Naive thymus-derived CD4-positive, alpha-beta T cell (primary cell): ENCODE measurements at regions of chr1 and their contacts with region 1.

Region 1: GRCh38 chr1:2314803-2315673 is 76.3 kb downstream of the MORN1 start:
- DNase-seq: peak; percentile 56 to 77 (median 70)
- ATAC-seq: peak; percentile 81
- H3K4me3 ChIP-seq: peak overlapping the region; percentile 55
- H3K4me3 Mint-ChIP-seq: peak overlapping the region in 9 of 10 donors; percentile 12 to 73 (median 64)
- H3K27ac ChIP-seq: peak overlapping the region; percentile 84
- H3K27ac Mint-ChIP-seq: peak overlapping the region in 8 of 9 donors; percentile 38 to 86 (median 65)
- H3K4me1 ChIP-seq: peaks cover 29 to 42% of the 10 kb centered on the region in 2 donors
- H3K4me1 Mint-ChIP-seq: peaks cover 3 to 19% (median 12%) of the 10 kb centered on the region in 7 donors
- H3K27me3 ChIP-seq: no peaks in the 10 kb centered on the region
- H3K27me3 Mint-ChIP-seq: no peaks in the 10 kb centered on the region

Region 2: DNA sequence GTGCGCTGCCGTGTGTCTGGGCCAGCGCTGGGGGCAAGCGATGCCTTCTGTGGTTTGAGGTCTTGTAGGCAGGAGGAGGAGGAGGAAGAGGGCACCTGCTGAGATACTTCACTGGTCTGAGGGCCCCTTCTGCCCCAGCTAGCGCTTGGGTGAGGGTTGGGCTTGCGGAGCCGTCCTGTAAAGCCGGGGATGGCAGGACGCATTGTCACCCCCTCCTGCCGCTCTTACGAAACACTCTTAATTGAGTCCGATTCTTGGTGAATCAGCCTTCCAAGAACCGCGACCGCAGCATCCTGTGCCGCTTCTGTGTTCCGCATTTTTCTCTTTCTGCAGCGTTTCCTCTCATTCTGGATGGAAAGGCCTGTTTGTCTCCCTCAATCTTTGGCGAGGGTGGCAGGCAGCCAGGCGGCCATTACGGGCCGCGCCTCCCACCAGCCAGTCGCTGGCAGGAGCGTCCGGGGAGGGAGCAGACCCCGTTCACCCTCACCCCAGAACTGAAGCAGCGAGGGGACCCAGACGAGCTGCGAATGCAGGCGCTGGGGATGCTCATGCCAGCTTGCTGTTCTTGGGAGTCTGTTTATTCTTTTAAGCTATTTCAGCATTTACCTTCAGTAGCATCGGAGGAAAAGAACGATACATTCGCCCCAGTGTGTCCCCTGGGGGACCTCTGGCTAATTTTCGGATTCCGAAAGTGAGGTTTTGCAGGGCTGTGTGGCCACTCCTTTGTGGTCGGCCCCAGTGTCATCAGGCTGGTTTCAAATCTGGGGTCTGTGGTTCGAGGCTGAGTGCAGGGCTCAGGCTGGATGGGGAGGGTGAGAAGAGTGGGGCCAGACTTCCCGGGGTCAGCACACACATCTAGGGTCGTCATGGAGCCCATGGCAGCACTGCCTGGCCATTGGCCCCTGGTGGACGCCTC is 24.2 kb before region 1 on chr1:
- CTCF ChIA-PET with region 1: interaction called, 4 read pairs
- POLR2A ChIA-PET with region 1: interaction called, 3 read pairs
- intact Hi-C with region 1: loop called in 1 of 2 experiments (anchors 1 kb)
- DNase-seq: peak; percentile 44 to 83 (median 79)
- ATAC-seq: peak; percentile 82
- H3K4me3 ChIP-seq: peak overlapping the region; percentile 52
- H3K4me3 Mint-ChIP-seq: peak overlapping the region; percentile 81 to 94 (median 88)
- H3K27ac ChIP-seq: peak overlapping the region; percentile 68
- H3K27ac Mint-ChIP-seq: peak overlapping the region; percentile 95 to 97 (median 96)
- H3K4me1 ChIP-seq: peaks cover 49 to 91% of the 10 kb centered on the region in 2 donors
- H3K4me1 Mint-ChIP-seq: peaks cover 51 to 98% (median 79%) of the 10 kb centered on the region in 7 donors
- H3K27me3 ChIP-seq: no peaks in the 10 kb centered on the region
- H3K27me3 Mint-ChIP-seq: no peaks in the 10 kb centered on the region

Region 3: GRCh38 chr1:2360588-2361364 is 45.7 kb after region 1 on chr1:
- CTCF ChIA-PET with region 1: no interaction called
- POLR2A ChIA-PET with region 1: no interaction called
- intact Hi-C with region 1: no loop called
- DNase-seq: no peak
- ATAC-seq: no peak
- H3K4me3 ChIP-seq: no peak overlapping the region
- H3K4me3 Mint-ChIP-seq: no peak overlapping the region
- H3K27ac ChIP-seq: no peak overlapping the region
- H3K27ac Mint-ChIP-seq: no peak overlapping the region
- H3K4me1 ChIP-seq: no peaks in the 10 kb centered on the region
- H3K4me1 Mint-ChIP-seq: no peaks in the 10 kb centered on the region
- H3K27me3 ChIP-seq: no peaks in the 10 kb centered on the region
- H3K27me3 Mint-ChIP-seq: peaks cover 0 to 5% (median 0%) of the 10 kb centered on the region in 5 donors

Region 4: DNA sequence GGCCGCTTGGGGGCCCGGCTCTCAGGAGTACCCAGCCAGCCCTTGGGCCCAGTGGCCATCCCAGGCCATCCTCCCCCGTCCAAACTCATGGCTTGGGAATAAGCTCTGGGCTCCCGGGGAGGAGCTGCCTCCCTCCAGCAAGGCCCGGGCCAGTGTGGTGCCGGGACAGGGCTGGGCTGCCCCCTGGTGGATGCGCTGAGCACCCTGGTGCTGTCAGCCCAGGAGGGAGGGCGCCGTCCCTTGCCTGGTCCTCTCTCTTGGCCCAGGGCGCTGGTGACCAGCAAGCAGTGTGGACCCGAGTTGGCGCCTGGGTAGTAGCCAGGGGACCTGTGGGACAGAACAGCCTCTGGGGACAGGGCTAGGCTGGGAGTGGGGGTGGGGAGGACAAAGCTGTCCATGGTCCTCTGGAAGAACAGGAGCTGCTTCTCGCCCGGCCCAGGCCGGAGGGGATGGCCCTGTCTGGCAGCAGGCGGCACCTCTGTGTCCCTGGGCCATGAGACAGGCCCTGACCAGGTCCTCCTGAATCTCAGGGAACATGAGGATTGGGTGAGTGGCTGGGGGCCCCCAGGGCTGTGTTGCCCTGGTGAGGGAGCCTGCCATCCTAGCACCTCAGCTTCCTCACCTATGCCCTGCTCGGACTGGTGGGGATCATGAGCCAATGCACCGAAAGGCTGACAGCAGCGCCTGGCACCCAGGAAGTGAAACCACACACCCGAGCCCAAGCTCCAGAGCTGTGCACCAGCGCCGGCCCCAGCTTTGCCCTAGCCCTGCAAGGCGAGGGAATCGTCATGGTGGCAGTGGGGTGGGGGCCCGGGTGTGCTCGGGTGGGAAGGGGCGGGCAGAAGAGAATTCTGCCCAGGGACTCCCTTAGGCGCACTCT is 66.9 kb after region 1 on chr1:
- CTCF ChIA-PET with region 1: interaction called, 4 read pairs
- POLR2A ChIA-PET with region 1: no interaction called
- intact Hi-C with region 1: loop called in 1 of 2 experiments (anchors 10 kb)
- DNase-seq: peak; percentile 55 to 83 (median 71)
- ATAC-seq: peak; percentile 97
- H3K4me3 ChIP-seq: no peak overlapping the region
- H3K4me3 Mint-ChIP-seq: no peak overlapping the region
- H3K27ac ChIP-seq: no peak overlapping the region
- H3K27ac Mint-ChIP-seq: no peak overlapping the region
- H3K4me1 ChIP-seq: peaks cover 6 to 7% of the 10 kb centered on the region in 2 donors
- H3K4me1 Mint-ChIP-seq: peaks cover 0 to 4% (median 0%) of the 10 kb centered on the region in 7 donors
- H3K27me3 ChIP-seq: no peaks in the 10 kb centered on the region
- H3K27me3 Mint-ChIP-seq: no peaks in the 10 kb centered on the region

Region 5: DNA sequence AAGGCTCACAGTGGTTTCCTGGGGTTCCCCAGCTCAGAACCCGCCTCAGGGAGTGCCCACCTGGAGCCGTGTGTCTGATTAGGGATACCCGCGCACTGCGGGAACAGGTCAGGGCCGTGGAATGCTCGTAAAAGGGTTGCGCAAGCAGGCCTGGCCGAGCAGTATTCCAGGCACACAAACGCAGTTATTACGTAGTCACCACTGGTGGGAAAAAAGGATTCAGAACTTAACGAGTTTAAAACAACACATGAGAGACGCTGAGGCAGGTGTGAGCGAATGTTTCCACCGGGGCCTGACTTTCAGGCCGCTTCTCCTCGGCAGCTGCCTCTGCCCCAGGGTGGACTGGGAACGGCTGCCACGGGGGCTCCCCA is 179.3 kb after region 1 on chr1:
- CTCF ChIA-PET with region 1: no interaction called
- POLR2A ChIA-PET with region 1: no interaction called
- intact Hi-C with region 1: no loop called
- DNase-seq: no peak
- ATAC-seq: no peak
- H3K4me3 ChIP-seq: no peak overlapping the region
- H3K4me3 Mint-ChIP-seq: no peak overlapping the region
- H3K27ac ChIP-seq: no peak overlapping the region
- H3K27ac Mint-ChIP-seq: peak overlapping the region in 4 of 9 donors; percentile 10 to 67 (median 57)
- H3K4me1 ChIP-seq: peaks cover 12 to 29% of the 10 kb centered on the region in 2 donors
- H3K4me1 Mint-ChIP-seq: peaks cover 5 to 22% (median 15%) of the 10 kb centered on the region in 7 donors
- H3K27me3 ChIP-seq: no peaks in the 10 kb centered on the region
- H3K27me3 Mint-ChIP-seq: no peaks in the 10 kb centered on the region